PC-9 (cell line): ENCODE measurements at regions of chr10 and their contacts with region 1.

Region 1: DNA sequence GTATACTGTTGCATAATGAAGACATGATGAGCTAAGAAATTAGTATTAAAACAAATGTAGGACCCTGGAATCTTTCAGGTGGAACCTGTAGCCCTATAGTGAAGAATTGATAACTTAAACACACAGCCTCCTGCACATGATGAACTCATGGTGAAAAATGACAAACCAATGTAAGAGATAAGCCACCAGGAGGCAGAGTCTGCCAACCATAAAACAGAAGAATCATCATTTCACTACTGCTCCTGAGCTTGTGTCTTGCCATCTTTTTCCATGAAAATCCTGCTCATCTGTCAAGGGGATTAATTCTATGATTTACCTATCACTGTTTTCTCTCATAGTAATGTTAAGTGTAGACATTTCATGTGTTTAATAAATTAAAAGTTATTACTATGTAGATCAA is 363.9 kb downstream of the MALRD1 start:
- DNase-seq: no peak
- H3K4me3 ChIP-seq: no peak overlapping the region
- H3K27ac ChIP-seq: no peak overlapping the region
- H3K4me1 ChIP-seq: no peaks in the 10 kb centered on the region
- H3K27me3 ChIP-seq: no peaks in the 10 kb centered on the region
- CTCF ChIP-seq: no peak

Region 2: GRCh38 chr10:18968181-18968580 is 444.4 kb before region 1 on chr10:
- CTCF ChIA-PET with region 1: no interaction called
- POLR2A ChIA-PET with region 1: no interaction called
- intact Hi-C with region 1: no loop called
- DNase-seq: no peak
- H3K4me3 ChIP-seq: no peak overlapping the region
- H3K27ac ChIP-seq: no peak overlapping the region
- H3K4me1 ChIP-seq: no peaks in the 10 kb centered on the region
- H3K27me3 ChIP-seq: no peaks in the 10 kb centered on the region
- CTCF ChIP-seq: no peak

Region 3: GRCh38 chr10:19367176-19367575 is 45.4 kb before region 1 on chr10:
- CTCF ChIA-PET with region 1: no interaction called
- POLR2A ChIA-PET with region 1: interaction called, 15 read pairs
- intact Hi-C with region 1: no loop called
- DNase-seq: no peak
- H3K4me3 ChIP-seq: no peak overlapping the region
- H3K27ac ChIP-seq: no peak overlapping the region
- H3K4me1 ChIP-seq: no peaks in the 10 kb centered on the region
- H3K27me3 ChIP-seq: no peaks in the 10 kb centered on the region
- CTCF ChIP-seq: no peak